ENCODE measurements at regions of chr12 and their contacts with region 1.

Region 1: GRCh38 chr12:53098982-53099651 is 1.6 kb downstream of the IGFBP6 start:
- DNase-seq: peak; percentile 72
- H3K4me3 Mint-ChIP-seq: peak overlapping the region; percentile 37
- H3K27ac Mint-ChIP-seq: peak overlapping the region; percentile 23
- H3K4me1 Mint-ChIP-seq: peaks cover 37% of the 10 kb centered on the region
- H3K27me3 Mint-ChIP-seq: peaks cover 35% of the 10 kb centered on the region

Region 2: GRCh38 chr12:53054112-53054833 is 44.8 kb before region 1 on chr12:
- intact Hi-C with region 1: loop called (anchors 1 kb)
- DNase-seq: peak; percentile 87
- H3K4me3 Mint-ChIP-seq: peak overlapping the region; percentile 93
- H3K27ac Mint-ChIP-seq: peak overlapping the region; percentile 93
- H3K4me1 Mint-ChIP-seq: peaks cover 18% of the 10 kb centered on the region
- H3K27me3 Mint-ChIP-seq: no peaks in the 10 kb centered on the region

Region 3: GRCh38 chr12:53065975-53066931 is 32.9 kb before region 1 on chr12:
- intact Hi-C with region 1: loop called (anchors 1 kb)
- DNase-seq: peak; percentile 49
- H3K4me3 Mint-ChIP-seq: no peak overlapping the region
- H3K27ac Mint-ChIP-seq: no peak overlapping the region
- H3K4me1 Mint-ChIP-seq: peaks cover 5% of the 10 kb centered on the region
- H3K27me3 Mint-ChIP-seq: no peaks in the 10 kb centered on the region

Region 4: GRCh38 chr12:53079226-53080117 is 19.6 kb before region 1 on chr12 and contains the start of gene SPRYD3:
- intact Hi-C with region 1: loop called (anchors 1 kb)
- DNase-seq: peak; percentile 97
- H3K4me3 Mint-ChIP-seq: peak within 1 kb of the TSS; percentile 93
- H3K27ac Mint-ChIP-seq: peak within 1 kb of the TSS; percentile 92
- H3K4me1 Mint-ChIP-seq: peaks cover 36% of the 10 kb centered on the region
- H3K27me3 Mint-ChIP-seq: no peaks in the 10 kb centered on the region
- total RNA-seq, gene SPRYD3: 41.2 and 42.6 TPM in 2 replicates

Region 5: GRCh38 chr12:53231826-53232645 is 132.9 kb after region 1 on chr12 and contains the start of gene RARG:
- intact Hi-C with region 1: no loop called
- DNase-seq: peak; percentile 42
- H3K4me3 Mint-ChIP-seq: peak within 1 kb of the TSS; percentile 88
- H3K27ac Mint-ChIP-seq: peak within 1 kb of the TSS; percentile 88
- H3K4me1 Mint-ChIP-seq: peaks cover 78% of the 10 kb centered on the region
- H3K27me3 Mint-ChIP-seq: no peaks in the 10 kb centered on the region
- total RNA-seq, gene RARG: 58.6 and 61.6 TPM in 2 replicates

Measured in activated T-helper 1 cell treated with anti-CD3 and anti-CD28 coated beads, Interleukin-12 subunit alpha, Interleukin-12 subunit beta, Interleukin-2, Interleukin-4 antibody, amounts not matched to agents 30 ng/mL and 10 ng/mL and 1 ng/mL, durations not matched to agents 14 hours and 24 hours and 36 hours (primary cell).